Natural killer cell (primary cell): ENCODE measurements at regions of chr11 and their contacts with region 1.

Region 1: DNA sequence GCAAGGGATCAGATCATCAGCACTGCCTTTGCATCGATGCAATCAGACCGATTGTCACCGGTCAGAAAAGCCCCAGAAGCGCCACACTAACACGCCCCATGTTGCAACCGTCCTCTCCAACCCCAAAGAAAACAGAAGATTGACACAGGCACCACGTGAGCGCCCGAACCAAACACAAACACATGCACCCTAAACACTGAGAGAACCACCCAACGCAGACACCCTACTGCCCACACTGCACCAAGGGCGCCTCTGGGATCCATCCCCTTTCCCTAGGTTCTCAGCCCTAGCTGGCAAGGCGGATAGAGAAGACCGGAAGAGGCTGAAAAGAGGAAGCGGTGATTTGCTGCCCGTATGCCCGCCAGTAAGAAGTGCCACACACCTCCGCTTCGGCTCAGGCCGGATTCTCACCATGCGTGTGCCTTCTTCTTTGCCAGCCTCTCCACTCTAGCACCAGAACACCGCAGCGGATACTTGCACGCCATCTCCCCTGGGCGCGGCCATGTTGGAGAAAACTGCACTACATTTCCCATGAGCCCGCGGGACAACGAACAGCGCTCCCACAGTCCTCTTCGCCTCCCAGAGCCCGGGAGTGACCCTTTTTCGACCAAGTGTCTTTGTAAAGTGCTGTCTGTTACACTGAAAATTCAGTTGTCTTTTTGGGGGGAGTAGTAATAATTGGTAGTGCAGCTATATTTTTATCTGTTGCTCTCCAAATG is at the start of gene ALKBH8:
- DNase-seq: peak; percentile 68 to 88
- ATAC-seq: peak; percentile 93 to 94 (median 93)
- H3K4me3 ChIP-seq: peak within 1 kb of the TSS; percentile 70
- H3K4me3 Mint-ChIP-seq: peak within 1 kb of the TSS; percentile 94
- H3K27ac ChIP-seq: peak within 1 kb of the TSS; percentile 75
- H3K27ac Mint-ChIP-seq: peak within 1 kb of the TSS; percentile 91 to 93
- H3K4me1 ChIP-seq: peaks cover 19% of the 10 kb centered on the region
- H3K4me1 Mint-ChIP-seq: peaks cover 27 to 39% of the 10 kb centered on the region in 2 donors
- H3K27me3 ChIP-seq: no peaks in the 10 kb centered on the region
- H3K27me3 Mint-ChIP-seq: peaks cover 4 to 6% of the 10 kb centered on the region in 2 donors
- CTCF ChIP-seq: no peak
- total RNA-seq, gene ALKBH8: 6.9 to 11.8 (median 9.0) TPM

Region 2: GRCh38 chr11:107457558-107458271 is 107.7 kb before region 1 on chr11 and contains the start of gene CWF19L2:
- intact Hi-C with region 1: loop called (anchors 1 kb)
- DNase-seq: peak; percentile 76 to 96
- ATAC-seq: peak; percentile 96 to 99 (median 97)
- H3K4me3 ChIP-seq: peak within 1 kb of the TSS; percentile 93
- H3K4me3 Mint-ChIP-seq: peak within 1 kb of the TSS; percentile 99
- H3K27ac ChIP-seq: peak within 1 kb of the TSS; percentile 84
- H3K27ac Mint-ChIP-seq: peak within 1 kb of the TSS; percentile 91 to 95
- H3K4me1 ChIP-seq: peaks cover 4% of the 10 kb centered on the region
- H3K4me1 Mint-ChIP-seq: peaks cover 24 to 28% of the 10 kb centered on the region in 2 donors
- H3K27me3 ChIP-seq: no peaks in the 10 kb centered on the region
- H3K27me3 Mint-ChIP-seq: peaks cover 17 to 20% of the 10 kb centered on the region in 2 donors
- CTCF ChIP-seq: no peak
- total RNA-seq, gene CWF19L2: 25.8 to 34.8 (median 28.0) TPM

Region 3: DNA sequence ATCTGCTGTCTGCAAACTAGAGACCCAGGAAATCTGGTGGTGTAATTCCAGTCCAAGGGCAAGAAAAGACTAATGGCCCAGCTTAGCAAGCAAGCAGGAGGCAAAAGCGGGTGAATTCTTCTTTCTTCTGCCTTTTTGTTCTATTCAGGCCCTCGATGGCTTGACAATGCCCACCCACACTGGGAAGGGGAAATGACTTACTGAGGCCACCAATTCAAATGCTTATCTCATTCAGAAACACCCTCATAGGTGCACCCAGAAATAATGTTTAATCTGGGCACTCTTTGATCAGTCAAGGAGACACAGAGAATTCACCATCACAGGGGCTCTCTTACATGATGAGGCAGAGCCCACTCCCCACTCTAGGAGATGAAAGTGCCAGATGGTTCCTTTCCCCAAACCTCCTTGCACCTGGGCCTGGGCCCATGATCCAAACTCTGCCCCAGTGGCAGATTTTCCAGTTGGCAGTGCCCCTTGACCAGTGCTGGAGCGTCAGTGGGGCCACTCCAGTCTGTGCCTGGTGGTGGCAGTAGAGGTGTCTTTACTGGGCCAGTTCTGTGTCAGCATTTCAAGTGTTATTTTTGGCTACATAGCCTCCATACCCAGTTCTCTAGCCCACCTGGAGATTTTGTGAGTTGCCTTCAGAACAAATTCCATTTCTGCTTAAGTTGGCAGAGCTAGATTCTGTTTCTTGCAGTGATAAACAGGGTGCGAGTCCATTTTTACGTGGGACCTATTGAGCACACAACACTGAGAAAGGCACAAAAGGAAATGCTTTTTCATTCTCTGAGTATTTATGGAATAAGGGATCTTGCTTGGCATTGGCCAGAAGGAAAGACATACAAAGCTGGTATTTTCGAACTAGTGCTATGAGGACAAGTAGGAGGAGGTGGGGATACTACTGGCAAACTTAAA is 33.1 kb after region 1 on chr11:
- intact Hi-C with region 1: no loop called
- DNase-seq: no peak
- ATAC-seq: peak in 1 of 3 donors; percentile 41
- H3K4me3 ChIP-seq: no peak overlapping the region
- H3K4me3 Mint-ChIP-seq: no peak overlapping the region
- H3K27ac ChIP-seq: no peak overlapping the region
- H3K27ac Mint-ChIP-seq: no peak overlapping the region
- H3K4me1 ChIP-seq: no peaks in the 10 kb centered on the region
- H3K4me1 Mint-ChIP-seq: no peaks in the 10 kb centered on the region
- H3K27me3 ChIP-seq: peaks cover 22% of the 10 kb centered on the region
- H3K27me3 Mint-ChIP-seq: peaks cover 32 to 57% of the 10 kb centered on the region in 2 donors
- CTCF ChIP-seq: no peak